ENCODE measurements at regions of chr22 and their contacts with region 1.

Region 1: DNA sequence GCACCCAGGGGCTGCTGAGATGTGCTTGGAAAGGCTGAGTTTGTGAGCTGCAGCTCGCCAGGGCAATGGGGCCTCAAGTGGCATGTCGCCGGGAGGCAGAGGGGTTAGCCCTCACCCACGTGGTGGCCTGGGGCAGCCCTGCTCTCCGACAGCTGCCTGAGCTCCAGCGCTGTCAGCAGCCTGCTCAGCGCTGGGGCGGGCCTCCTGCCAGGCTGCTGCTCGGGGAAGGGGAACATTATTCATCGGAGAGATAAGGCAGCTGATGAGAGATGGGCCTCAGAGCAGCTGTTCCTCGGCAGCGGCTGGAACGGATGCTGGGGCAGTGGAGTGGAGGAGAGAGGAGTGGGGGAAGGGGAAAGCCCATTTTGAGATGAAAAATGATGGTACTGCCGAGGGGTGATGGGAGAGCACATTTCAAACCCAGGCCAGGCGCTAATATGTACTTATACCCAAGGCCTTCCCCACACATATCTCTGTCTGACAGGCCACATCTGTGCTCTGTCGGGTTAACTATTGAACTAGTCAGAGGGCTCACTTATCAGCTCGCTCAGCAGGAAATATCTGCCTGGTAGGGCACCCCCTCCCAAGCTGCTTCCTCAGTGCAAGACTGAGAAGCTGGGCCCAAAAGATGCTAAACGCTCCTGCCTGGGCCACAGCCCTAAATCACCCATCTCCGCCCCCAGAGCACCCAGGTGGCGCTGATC is 79.5 kb downstream of the TIMP3 start:
- DNase-seq: peak; percentile 78 to 93 (median 83)
- ATAC-seq: peak; percentile 85
- H3K4me3 ChIP-seq: no peak overlapping the region
- H3K27ac ChIP-seq: peak overlapping the region; percentile 70
- H3K4me1 ChIP-seq: peaks cover 13 to 25% of the 10 kb centered on the region in 2 experiments; a peak in 4 of 5 replicates
- H3K27me3 ChIP-seq: no peaks in the 10 kb centered on the region
- CTCF ChIP-seq: no peak
- EP300 ChIP-seq: peak; percentile 72
- POLR2A ChIP-seq: no peak
- RAD21 ChIP-seq: no peak; a peak in 1 of 4 replicates

Region 2: GRCh38 chr22:32836280-32837123 is 44.5 kb before region 1 on chr22:
- CTCF ChIA-PET with region 1: no interaction called
- POLR2A ChIA-PET with region 1: no interaction called
- in situ Hi-C with region 1: no loop called
- intact Hi-C with region 1: loop called (anchors 5 kb)
- DNase-seq: peak; percentile 20 to 54 (median 42)
- ATAC-seq: peak; percentile 55; the same call in 2 of the 3 replicates
- H3K4me3 ChIP-seq: no peak overlapping the region
- H3K27ac ChIP-seq: no peak overlapping the region
- H3K4me1 ChIP-seq: no peaks in the 10 kb centered on the region
- H3K27me3 ChIP-seq: no peaks in the 10 kb centered on the region; a peak in 1 of 5 replicates
- CTCF ChIP-seq: peak; percentile 30 to 60 (median 54); a peak in 5 of 6 replicates
- EP300 ChIP-seq: no peak
- POLR2A ChIP-seq: no peak
- RAD21 ChIP-seq: peak in 1 of 2 experiments; percentile 27; a peak in 2 of 4 replicates

Measured in K562 (cell line).